ENCODE measurements at regions of chr2 and their contacts with region 1.

Region 1: GRCh38 chr2:190679813-190680591 is 31.1 kb downstream of the NAB1 start:
- DNase-seq: no peak
- H3K4me3 ChIP-seq: no peak overlapping the region
- H3K27ac ChIP-seq: no peak overlapping the region
- H3K4me1 ChIP-seq: peaks cover 53% of the 10 kb centered on the region
- H3K27me3 ChIP-seq: no peaks in the 10 kb centered on the region
- CTCF ChIP-seq: peak; percentile 11 to 21
- POLR2A ChIP-seq: no peak

Region 2: DNA sequence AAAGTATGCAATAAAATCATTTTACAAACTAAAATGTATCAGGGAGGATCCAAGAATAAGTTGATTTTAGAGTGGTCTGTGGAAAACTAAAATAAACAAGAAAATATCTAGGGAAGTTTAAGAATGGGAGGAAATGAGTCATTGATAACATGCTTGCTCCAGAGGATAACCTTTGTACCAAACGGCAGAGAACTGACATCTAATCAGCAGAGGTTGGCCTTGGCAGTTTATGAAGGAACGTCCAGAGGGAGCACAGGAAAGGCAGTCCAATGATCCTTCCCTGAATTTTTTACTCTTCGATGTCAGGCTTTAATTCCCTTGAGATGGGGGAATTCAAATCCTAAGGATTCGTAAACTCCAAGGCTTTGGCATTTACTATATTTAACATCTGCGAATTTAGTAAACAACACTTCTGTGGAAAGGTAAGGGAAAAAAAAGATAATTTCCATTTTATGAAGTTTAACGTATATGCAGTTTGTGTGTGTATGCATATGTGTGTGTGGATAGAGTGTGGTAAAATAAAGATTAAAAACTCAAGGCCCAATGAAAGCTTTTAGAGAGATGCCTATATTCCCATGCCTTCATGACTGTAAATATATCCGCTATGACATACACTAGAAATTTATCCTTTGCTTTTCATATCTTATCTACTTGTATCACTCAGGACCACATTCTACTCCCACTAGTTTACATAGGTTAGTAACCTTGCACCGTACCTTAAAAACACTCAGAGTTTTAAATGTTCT is 345.4 kb before region 1 on chr2:
- CTCF ChIA-PET with region 1: no interaction called
- POLR2A ChIA-PET with region 1: no interaction called
- dilution Hi-C with region 1: no loop called
- intact Hi-C with region 1: loop called (anchors 10 kb)
- DNase-seq: peak; percentile 87
- H3K4me3 ChIP-seq: peak overlapping the region in 1 of 3 experiments; percentile 41
- H3K27ac ChIP-seq: peak overlapping the region; percentile 77
- H3K4me1 ChIP-seq: peaks cover 25% of the 10 kb centered on the region
- H3K27me3 ChIP-seq: no peaks in the 10 kb centered on the region
- CTCF ChIP-seq: no peak
- POLR2A ChIP-seq: peak; percentile 49

Region 3: GRCh38 chr2:190636373-190636772 is 43.6 kb before region 1 on chr2:
- CTCF ChIA-PET with region 1: no interaction called
- POLR2A ChIA-PET with region 1: no interaction called
- dilution Hi-C with region 1: no loop called
- intact Hi-C with region 1: loop called (anchors 2 kb)
- DNase-seq: peak; percentile 70
- H3K4me3 ChIP-seq: no peak overlapping the region
- H3K27ac ChIP-seq: peak overlapping the region; percentile 22
- H3K4me1 ChIP-seq: peaks cover 12% of the 10 kb centered on the region
- H3K27me3 ChIP-seq: no peaks in the 10 kb centered on the region
- CTCF ChIP-seq: no peak
- POLR2A ChIP-seq: no peak

Region 4: DNA sequence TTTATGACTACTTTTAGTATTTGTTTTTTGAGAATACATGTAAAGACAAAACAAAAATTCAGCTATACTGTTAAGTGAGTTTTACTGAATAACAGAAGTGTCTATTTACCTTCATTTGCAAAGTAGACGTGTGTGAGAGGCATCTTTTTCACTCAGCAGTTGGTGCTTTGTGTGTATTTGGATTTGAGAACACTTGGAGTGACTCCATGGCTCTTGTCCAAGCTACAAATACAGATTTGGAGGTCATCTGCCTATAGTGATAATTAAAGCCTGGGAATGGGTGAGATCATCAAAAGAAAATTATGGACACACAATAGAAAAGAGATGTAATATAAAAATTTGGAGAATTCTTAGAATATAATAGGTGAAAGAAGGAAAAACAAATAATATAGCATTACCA is 24.9 kb before region 1 on chr2:
- CTCF ChIA-PET with region 1: interaction called, 10 read pairs
- POLR2A ChIA-PET with region 1: interaction called, 4 read pairs
- dilution Hi-C with region 1: no loop called
- intact Hi-C with region 1: no loop called
- DNase-seq: peak; percentile 20
- H3K4me3 ChIP-seq: no peak overlapping the region
- H3K27ac ChIP-seq: no peak overlapping the region
- H3K4me1 ChIP-seq: peaks cover 12% of the 10 kb centered on the region
- H3K27me3 ChIP-seq: no peaks in the 10 kb centered on the region
- CTCF ChIP-seq: no peak
- POLR2A ChIP-seq: no peak

Region 5: GRCh38 chr2:190791347-190791975 is 111.5 kb after region 1 on chr2:
- CTCF ChIA-PET with region 1: no interaction called
- POLR2A ChIA-PET with region 1: no interaction called
- dilution Hi-C with region 1: no loop called
- intact Hi-C with region 1: loop called (anchors 5 kb)
- DNase-seq: peak; percentile 93
- H3K4me3 ChIP-seq: peak overlapping the region in 1 of 3 experiments; percentile 49
- H3K27ac ChIP-seq: peak overlapping the region; percentile 92
- H3K4me1 ChIP-seq: peaks cover 45% of the 10 kb centered on the region
- H3K27me3 ChIP-seq: no peaks in the 10 kb centered on the region
- CTCF ChIP-seq: no peak
- POLR2A ChIP-seq: no peak

Region 6: DNA sequence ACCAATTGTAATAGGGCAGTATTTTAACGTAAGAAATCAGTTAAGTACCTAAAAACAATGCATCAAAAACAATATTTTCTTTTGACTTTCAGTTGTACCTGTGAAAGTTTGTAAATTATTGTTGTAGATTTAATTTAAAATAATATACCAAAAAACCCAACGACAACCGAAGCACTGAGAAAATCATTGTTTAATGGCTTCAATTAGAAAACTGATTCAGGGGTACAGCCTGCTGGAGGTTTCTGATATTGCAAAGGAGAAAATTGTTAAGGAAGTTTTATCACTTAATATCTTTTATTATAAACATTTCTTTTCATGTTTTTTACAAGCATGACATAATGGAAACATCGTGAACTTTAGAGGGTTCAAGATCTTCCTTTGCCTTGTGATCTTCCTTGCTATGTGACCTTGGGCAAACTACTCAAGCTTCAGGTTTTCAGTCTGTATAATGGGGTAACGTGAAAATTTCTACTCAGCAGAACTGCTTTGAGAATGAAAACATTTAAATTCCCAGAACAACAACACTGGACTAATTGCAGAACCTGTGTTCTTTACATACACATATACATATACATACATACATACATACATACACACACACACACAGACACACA is 124.3 kb after region 1 on chr2:
- CTCF ChIA-PET with region 1: no interaction called
- POLR2A ChIA-PET with region 1: no interaction called
- dilution Hi-C with region 1: no loop called
- intact Hi-C with region 1: no loop called
- DNase-seq: peak; percentile 74
- H3K4me3 ChIP-seq: no peak overlapping the region
- H3K27ac ChIP-seq: no peak overlapping the region
- H3K4me1 ChIP-seq: peaks cover 2% of the 10 kb centered on the region
- H3K27me3 ChIP-seq: peaks cover 0 to 3% of the 10 kb centered on the region in 2 experiments
- CTCF ChIP-seq: peak; percentile 36 to 40
- POLR2A ChIP-seq: no peak

Region 7: DNA sequence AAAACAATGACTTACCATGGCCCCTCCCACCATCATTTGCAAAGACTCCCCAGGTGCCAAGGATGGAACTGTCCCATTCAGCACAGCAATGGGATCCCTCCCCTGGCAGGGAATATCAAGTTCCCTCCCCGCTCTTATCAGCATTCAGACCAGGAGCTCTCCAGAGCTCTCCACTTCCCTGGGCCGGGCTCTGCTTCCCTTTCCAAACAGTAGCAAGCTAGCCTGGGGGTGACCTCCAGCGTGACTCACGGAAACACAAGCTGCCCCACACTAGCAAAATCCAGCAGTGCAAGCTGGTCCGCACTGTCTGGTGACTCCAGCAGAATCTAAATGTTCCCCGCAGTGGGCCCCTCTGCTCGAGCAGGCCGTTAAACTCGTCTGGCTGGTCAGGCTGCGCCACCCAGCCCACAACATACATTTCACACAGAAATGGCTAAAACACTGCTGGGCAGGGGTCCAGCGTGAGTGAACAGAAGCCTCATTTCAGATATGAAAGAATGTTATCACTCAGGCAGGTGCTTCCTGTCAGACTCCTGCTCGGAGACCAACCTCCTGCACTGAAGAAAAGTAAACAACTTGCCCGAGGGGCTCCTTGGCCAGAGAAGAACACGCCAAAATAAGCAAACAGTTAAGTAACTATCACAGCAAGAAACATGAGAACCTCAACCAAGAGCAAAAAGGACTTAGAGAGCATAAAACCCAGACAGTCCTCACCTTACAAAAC is 300.1 kb after region 1 on chr2:
- CTCF ChIA-PET with region 1: no interaction called
- POLR2A ChIA-PET with region 1: no interaction called
- dilution Hi-C with region 1: no loop called
- intact Hi-C with region 1: loop called (anchors 5 kb)
- DNase-seq: peak; percentile 99
- H3K4me3 ChIP-seq: peak overlapping the region in 1 of 3 experiments; percentile 5
- H3K27ac ChIP-seq: peak overlapping the region; percentile 87
- H3K4me1 ChIP-seq: peaks cover 57% of the 10 kb centered on the region
- H3K27me3 ChIP-seq: no peaks in the 10 kb centered on the region
- CTCF ChIP-seq: no peak
- POLR2A ChIP-seq: peak; percentile 13